ENCODE measurements at regions of chr2 and their contacts with region 1.

Region 1: GRCh38 chr2:239444626-239445625 is 44.1 kb upstream of the HDAC4 start:
- DNase-seq: peak in 1 of 2 donors; percentile 57
- ATAC-seq: peak; percentile 74 to 78
- H3K4me3 ChIP-seq: no peak overlapping the region
- H3K27ac ChIP-seq: peak overlapping the region in 1 of 4 donors; percentile 52
- H3K4me1 ChIP-seq: peaks cover 7 to 13% of the 10 kb centered on the region in 2 donors
- H3K27me3 ChIP-seq: peaks cover 4 to 7% (median 7%) of the 10 kb centered on the region in 3 donors
- CTCF ChIP-seq: no peak
- POLR2A ChIP-seq: no peak

Region 2: GRCh38 chr2:239129147-239129920 is 315.6 kb before region 1 on chr2:
- in situ Hi-C with region 1: no loop called
- intact Hi-C with region 1: no loop called
- DNase-seq: no peak
- ATAC-seq: no peak
- H3K4me3 ChIP-seq: no peak overlapping the region
- H3K27ac ChIP-seq: no peak overlapping the region
- H3K4me1 ChIP-seq: no peaks in the 10 kb centered on the region
- H3K27me3 ChIP-seq: no peaks in the 10 kb centered on the region
- CTCF ChIP-seq: no peak
- POLR2A ChIP-seq: no peak

Region 3: GRCh38 chr2:239544143-239544917 is 99.4 kb after region 1 on chr2:
- in situ Hi-C with region 1: no loop called
- intact Hi-C with region 1: loop called (anchors 5 kb)
- DNase-seq: peak in 1 of 2 donors; percentile 4
- ATAC-seq: no peak
- H3K4me3 ChIP-seq: no peak overlapping the region
- H3K27ac ChIP-seq: no peak overlapping the region
- H3K4me1 ChIP-seq: peaks cover 7 to 10% of the 10 kb centered on the region in 2 donors
- H3K27me3 ChIP-seq: no peaks in the 10 kb centered on the region
- CTCF ChIP-seq: no peak
- POLR2A ChIP-seq: no peak

Region 4: DNA sequence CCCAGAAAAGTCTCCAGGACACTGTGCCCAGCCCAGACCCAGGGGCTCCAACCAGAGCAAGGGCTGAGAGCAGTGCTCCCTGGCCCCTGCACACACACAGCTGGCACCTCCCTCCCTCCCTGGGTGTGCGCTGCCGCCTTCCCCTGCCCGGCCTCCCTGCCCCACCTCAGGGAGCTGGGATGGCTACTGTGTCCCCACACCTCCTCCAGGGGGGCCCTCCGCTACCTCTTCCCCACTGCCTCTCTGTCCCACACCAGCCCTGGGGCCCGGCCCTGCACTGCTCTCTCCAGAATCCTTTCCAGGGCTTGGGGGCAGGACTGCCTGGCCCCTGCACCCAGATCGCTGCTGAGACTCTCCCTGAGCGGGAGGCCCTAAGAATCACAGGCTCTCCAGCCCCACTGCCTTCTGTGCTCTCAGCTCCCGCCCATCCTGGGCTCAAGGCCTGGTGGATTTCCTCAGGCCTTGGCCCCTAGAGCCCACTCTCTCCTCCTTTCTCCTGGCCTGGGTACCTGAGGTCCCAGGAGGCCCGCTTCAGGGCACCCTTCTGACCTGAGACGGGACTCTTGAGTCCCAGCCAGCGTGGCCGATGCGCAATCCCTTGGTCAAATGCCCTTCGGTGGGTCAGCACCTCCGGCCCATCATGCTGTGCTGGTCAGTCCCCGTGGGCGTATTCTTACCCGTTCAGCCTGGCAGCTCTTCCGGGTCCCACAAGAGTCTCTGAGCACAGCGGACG is 232.7 kb after region 1 on chr2:
- in situ Hi-C with region 1: no loop called
- intact Hi-C with region 1: no loop called
- DNase-seq: no peak
- ATAC-seq: no peak
- H3K4me3 ChIP-seq: no peak overlapping the region
- H3K27ac ChIP-seq: no peak overlapping the region
- H3K4me1 ChIP-seq: no peaks in the 10 kb centered on the region
- H3K27me3 ChIP-seq: no peaks in the 10 kb centered on the region
- CTCF ChIP-seq: no peak
- POLR2A ChIP-seq: no peak

Measured in gastrocnemius medialis (tissue), 4 donors.